MCF 10A (cell line): ENCODE measurements at regions of chr6 and their contacts with region 1.

Region 1: GRCh38 chr6:71642120-71642519 is 244.2 kb upstream of the RIMS1 start:
- DNase-seq: no peak
- H3K4me3 Mint-ChIP-seq: no peak overlapping the region
- H3K27ac Mint-ChIP-seq: no peak overlapping the region
- H3K4me1 Mint-ChIP-seq: no peaks in the 10 kb centered on the region
- H3K27me3 Mint-ChIP-seq: peaks cover 61% of the 10 kb centered on the region
- CTCF ChIP-seq: no peak

Region 2: DNA sequence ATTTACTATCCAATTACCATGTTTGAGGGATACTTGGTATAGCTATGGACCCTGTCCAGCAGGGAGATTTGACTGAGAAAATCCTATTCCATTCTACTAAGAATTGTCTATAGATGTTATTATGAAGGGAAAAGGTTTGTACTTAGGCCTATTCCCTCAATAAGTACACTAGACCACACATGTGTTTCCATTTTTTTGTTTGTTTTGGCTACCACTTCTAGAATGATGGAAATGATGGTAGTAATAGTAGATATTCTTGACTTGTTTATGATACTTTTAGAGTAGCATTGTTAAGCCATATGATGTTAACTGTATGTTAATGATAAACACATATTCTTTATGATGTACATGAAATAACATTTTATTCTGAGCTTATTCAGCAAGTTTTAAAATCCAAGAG is 208.7 kb before region 1 on chr6:
- CTCF ChIA-PET with region 1: no interaction called
- POLR2A ChIA-PET with region 1: no interaction called
- intact Hi-C with region 1: no loop called
- DNase-seq: no peak
- H3K4me3 Mint-ChIP-seq: no peak overlapping the region
- H3K27ac Mint-ChIP-seq: no peak overlapping the region
- H3K4me1 Mint-ChIP-seq: no peaks in the 10 kb centered on the region
- H3K27me3 Mint-ChIP-seq: peaks cover 36% of the 10 kb centered on the region
- CTCF ChIP-seq: no peak

Region 3: GRCh38 chr6:71599351-71599750 is 42.8 kb before region 1 on chr6:
- CTCF ChIA-PET with region 1: no interaction called
- POLR2A ChIA-PET with region 1: no interaction called
- intact Hi-C with region 1: loop called (anchors 1 kb)
- DNase-seq: no peak
- H3K4me3 Mint-ChIP-seq: no peak overlapping the region
- H3K27ac Mint-ChIP-seq: no peak overlapping the region
- H3K4me1 Mint-ChIP-seq: peaks cover 9% of the 10 kb centered on the region
- H3K27me3 Mint-ChIP-seq: no peaks in the 10 kb centered on the region
- CTCF ChIP-seq: no peak

Region 4: DNA sequence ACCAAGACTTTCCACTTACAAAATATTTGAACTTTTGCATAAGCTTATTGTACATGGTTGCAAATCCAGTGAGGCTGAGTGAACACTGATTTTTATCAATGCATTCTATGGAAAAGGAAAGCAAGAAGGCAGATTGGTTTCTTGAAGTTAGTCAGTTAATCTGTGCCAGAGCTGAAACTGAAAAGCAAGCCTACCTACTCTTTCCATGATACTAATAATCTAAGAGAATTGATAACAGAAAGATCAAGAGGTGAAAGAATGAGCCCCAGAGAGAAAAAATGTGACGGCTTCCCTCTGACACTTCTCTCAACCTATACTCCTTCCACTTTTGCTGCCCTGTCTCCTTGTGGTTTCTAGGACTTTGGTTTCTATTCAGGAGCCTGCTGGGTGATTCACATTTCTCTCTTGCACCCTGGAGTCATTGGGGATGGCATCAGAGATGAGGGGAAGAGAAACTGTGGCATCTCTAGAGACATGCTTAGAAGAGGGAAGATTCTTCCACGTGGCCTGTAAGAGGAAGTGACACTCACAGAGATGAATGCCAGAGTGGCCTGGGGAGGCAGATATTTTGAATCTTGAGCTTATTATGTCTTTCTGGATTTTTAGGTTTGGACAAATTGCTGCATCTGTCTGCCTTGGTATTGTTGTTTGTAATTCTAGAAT is 85.6 kb after region 1 on chr6:
- CTCF ChIA-PET with region 1: no interaction called
- POLR2A ChIA-PET with region 1: no interaction called
- intact Hi-C with region 1: no loop called
- DNase-seq: no peak
- H3K4me3 Mint-ChIP-seq: no peak overlapping the region
- H3K27ac Mint-ChIP-seq: no peak overlapping the region
- H3K4me1 Mint-ChIP-seq: no peaks in the 10 kb centered on the region
- H3K27me3 Mint-ChIP-seq: peaks cover 63% of the 10 kb centered on the region
- CTCF ChIP-seq: no peak